ENCODE measurements at regions of chr4 and their contacts with region 1.

Region 1: GRCh38 chr4:153791746-153792617 is 3.1 kb upstream of the SFRP2 start:
- DNase-seq: peak; percentile 85 to 97
- H3K4me3 ChIP-seq: peak overlapping the region; percentile 59 to 94 (median 78)
- H3K27ac ChIP-seq: no peak overlapping the region
- H3K4me1 ChIP-seq: peaks cover 0 to 18% (median 12%) of the 10 kb centered on the region in 4 experiments; a peak in 6 of 7 replicates
- H3K27me3 ChIP-seq: peaks cover 0 to 11% (median 8%) of the 10 kb centered on the region in 4 experiments; a peak in 5 of 7 replicates
- CTCF ChIP-seq: peak in 2 of 3 experiments; percentile 76 to 78; a peak in 3 of 4 replicates
- EP300 ChIP-seq: peak in 1 of 2 experiments; percentile 29; a peak in 1 of 3 replicates
- POLR2A ChIP-seq: no peak; a peak in 1 of 3 replicates
- RAD21 ChIP-seq: peak; percentile 73 to 81

Region 2: GRCh38 chr4:153804722-153805121 is 12.7 kb after region 1 on chr4:
- CTCF ChIA-PET with region 1: interaction called, 13 read pairs
- POLR2A ChIA-PET with region 1: interaction called, 6 read pairs
- DNase-seq: no peak
- H3K4me3 ChIP-seq: no peak overlapping the region
- H3K27ac ChIP-seq: no peak overlapping the region
- H3K4me1 ChIP-seq: no peaks in the 10 kb centered on the region
- H3K27me3 ChIP-seq: no peaks in the 10 kb centered on the region
- CTCF ChIP-seq: no peak
- EP300 ChIP-seq: no peak
- POLR2A ChIP-seq: no peak
- RAD21 ChIP-seq: no peak

Region 3: GRCh38 chr4:153940916-153941315 is 148.9 kb after region 1 on chr4:
- CTCF ChIA-PET with region 1: interaction called, 10 read pairs
- POLR2A ChIA-PET with region 1: no interaction called
- DNase-seq: no peak
- H3K4me3 ChIP-seq: no peak overlapping the region
- H3K27ac ChIP-seq: no peak overlapping the region
- H3K4me1 ChIP-seq: no peaks in the 10 kb centered on the region
- H3K27me3 ChIP-seq: peaks cover 0 to 1% (median 0%) of the 10 kb centered on the region in 4 experiments; a peak in 1 of 7 replicates
- CTCF ChIP-seq: no peak
- EP300 ChIP-seq: no peak
- POLR2A ChIP-seq: no peak
- RAD21 ChIP-seq: no peak

Region 4: DNA sequence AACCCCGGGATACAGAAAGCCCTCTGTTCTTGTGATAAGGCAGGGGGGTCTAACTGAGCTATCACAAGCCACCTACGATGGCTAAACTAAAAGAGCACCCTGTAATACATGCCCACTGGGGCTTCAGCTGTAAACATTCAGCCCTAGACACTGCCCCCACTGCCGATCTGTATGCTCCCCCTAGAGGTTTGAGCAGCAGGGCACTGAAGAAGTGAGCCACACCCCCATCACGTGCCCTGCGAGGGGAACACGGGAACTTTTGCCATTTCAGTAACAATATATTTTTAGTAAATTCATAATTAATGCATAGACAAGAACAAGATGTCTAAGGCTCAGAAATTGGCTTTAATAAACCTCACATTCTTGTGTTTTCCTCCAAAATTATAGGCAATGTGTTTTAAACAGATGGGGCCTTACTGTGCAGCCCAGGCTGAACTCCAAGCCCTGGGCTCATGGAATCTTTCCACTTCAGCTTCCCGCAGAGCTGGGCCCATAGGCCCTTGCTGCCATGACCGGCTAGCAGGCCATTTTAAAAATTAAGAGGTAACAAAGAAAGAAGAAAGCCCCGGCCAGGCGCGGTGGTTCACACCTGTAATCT is 232.2 kb after region 1 on chr4:
- CTCF ChIA-PET with region 1: interaction called, 117 read pairs
- POLR2A ChIA-PET with region 1: interaction called, 14 read pairs
- DNase-seq: no peak
- H3K4me3 ChIP-seq: no peak overlapping the region
- H3K27ac ChIP-seq: no peak overlapping the region
- H3K4me1 ChIP-seq: no peaks in the 10 kb centered on the region; a peak in 1 of 7 replicates
- H3K27me3 ChIP-seq: no peaks in the 10 kb centered on the region
- CTCF ChIP-seq: peak; percentile 40 to 57 (median 42)
- EP300 ChIP-seq: no peak
- POLR2A ChIP-seq: no peak
- RAD21 ChIP-seq: peak; percentile 42 to 52